MCF 10A (cell line): ENCODE measurements at regions of chr2 and their contacts with region 1.

Region 1: DNA sequence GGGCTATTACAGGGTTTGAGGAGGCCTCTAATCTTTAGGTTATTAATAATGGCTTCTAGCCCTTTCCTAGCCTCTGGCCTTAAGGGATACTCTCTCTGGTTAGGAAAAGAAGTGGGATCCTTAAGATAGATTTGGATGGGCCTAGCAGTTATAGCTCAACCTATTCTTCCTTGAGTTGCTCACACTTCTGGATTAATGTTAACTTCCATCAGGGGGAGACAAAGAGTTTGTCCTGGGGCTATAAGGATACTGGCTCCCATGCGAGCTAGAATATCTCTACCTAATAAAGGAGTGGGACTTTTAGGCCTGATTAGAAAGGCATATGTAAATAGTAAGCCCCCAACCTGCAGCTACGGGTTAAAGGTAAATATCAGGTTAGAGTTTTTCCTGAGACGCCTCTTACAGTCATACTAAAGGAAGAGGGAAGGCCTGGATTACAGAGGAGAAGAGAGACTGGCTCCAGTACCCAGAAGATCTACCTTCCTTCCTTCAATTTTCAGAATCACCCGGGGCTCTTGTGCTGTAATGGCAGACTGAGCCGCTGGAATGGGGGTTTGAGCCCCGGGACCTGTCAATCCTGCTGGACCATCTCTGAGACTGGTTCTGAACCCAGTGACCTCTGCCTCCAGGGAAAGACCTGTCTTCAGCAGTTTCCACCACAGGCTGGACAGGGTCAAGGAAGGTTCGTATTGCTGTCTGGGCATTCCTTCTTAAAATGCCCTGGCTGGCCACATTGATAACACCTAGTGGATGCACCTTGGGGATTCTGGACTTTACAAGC is 14.1 kb upstream of the PTH2R start:
- DNase-seq: peak; percentile 17
- H3K4me3 Mint-ChIP-seq: no peak overlapping the region
- H3K27ac Mint-ChIP-seq: no peak overlapping the region
- H3K4me1 Mint-ChIP-seq: no peaks in the 10 kb centered on the region
- H3K27me3 Mint-ChIP-seq: no peaks in the 10 kb centered on the region
- CTCF ChIP-seq: no peak

Region 2: DNA sequence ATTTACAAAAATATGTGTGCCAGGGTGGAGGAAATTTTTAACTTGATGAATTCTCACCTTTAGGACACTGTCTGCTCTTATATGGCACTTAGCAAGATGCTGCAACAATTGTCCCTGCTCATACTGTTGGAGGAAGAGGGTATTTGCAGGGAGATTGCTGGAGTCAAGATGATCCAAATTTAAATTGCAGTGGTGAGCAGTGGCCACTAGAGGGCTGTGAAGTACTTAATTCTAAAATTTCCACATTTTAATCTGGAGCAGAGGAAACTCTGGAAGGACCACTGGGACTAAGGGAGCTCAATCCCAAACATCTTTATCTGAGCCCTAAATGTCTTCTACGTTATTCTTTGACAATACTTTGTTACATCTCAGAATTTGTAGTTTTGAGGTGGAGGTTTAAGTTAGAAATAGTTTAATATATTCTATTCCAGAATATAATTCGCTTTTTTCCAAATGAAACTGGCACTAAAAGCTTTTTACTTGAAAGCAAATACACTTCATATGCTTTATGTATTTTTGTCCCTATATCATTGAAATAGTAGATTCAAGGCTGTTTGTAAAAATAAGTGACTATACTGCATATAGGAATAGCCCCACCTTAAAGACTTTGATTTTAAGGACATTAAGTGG is 18.9 kb before region 1 on chr2:
- CTCF ChIA-PET with region 1: interaction called, 54 read pairs
- POLR2A ChIA-PET with region 1: no interaction called
- intact Hi-C with region 1: no loop called
- DNase-seq: peak; percentile 59
- H3K4me3 Mint-ChIP-seq: no peak overlapping the region
- H3K27ac Mint-ChIP-seq: no peak overlapping the region
- H3K4me1 Mint-ChIP-seq: peaks cover 5% of the 10 kb centered on the region
- H3K27me3 Mint-ChIP-seq: no peaks in the 10 kb centered on the region
- CTCF ChIP-seq: peak; percentile 65

Region 3: GRCh38 chr2:208440716-208441115 is 48.2 kb after region 1 on chr2:
- CTCF ChIA-PET with region 1: no interaction called
- POLR2A ChIA-PET with region 1: no interaction called
- intact Hi-C with region 1: no loop called
- DNase-seq: no peak
- H3K4me3 Mint-ChIP-seq: no peak overlapping the region
- H3K27ac Mint-ChIP-seq: no peak overlapping the region
- H3K4me1 Mint-ChIP-seq: no peaks in the 10 kb centered on the region
- H3K27me3 Mint-ChIP-seq: peaks cover 79% of the 10 kb centered on the region
- CTCF ChIP-seq: no peak

Region 4: GRCh38 chr2:208466151-208466919 is 73.8 kb after region 1 on chr2:
- CTCF ChIA-PET with region 1: interaction called, 6 read pairs
- POLR2A ChIA-PET with region 1: no interaction called
- intact Hi-C with region 1: loop called (anchors 2 kb)
- DNase-seq: peak; percentile 68
- H3K4me3 Mint-ChIP-seq: no peak overlapping the region
- H3K27ac Mint-ChIP-seq: no peak overlapping the region
- H3K4me1 Mint-ChIP-seq: no peaks in the 10 kb centered on the region
- H3K27me3 Mint-ChIP-seq: peaks cover 21% of the 10 kb centered on the region
- CTCF ChIP-seq: peak; percentile 75

Region 5: DNA sequence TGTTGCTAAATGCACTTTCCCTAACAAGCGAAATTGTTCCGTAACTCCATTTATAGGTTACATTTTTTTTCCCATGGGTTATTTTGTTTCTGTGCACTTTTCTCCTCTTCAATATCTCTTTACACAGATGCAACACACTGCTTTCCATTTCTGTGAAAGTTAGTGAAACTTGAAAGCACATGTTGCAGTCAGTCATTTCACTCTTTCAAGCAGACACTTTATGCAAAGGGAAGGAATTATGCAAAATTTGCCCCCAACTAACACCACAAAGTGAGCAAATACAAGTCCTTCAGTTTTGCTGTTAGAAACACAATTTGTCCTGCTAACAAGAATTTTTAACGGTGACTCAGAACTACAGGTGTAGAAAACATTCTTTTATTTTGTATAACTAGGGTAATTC is 138.9 kb after region 1 on chr2:
- CTCF ChIA-PET with region 1: no interaction called
- POLR2A ChIA-PET with region 1: no interaction called
- intact Hi-C with region 1: no loop called
- DNase-seq: no peak
- H3K4me3 Mint-ChIP-seq: no peak overlapping the region
- H3K27ac Mint-ChIP-seq: no peak overlapping the region
- H3K4me1 Mint-ChIP-seq: no peaks in the 10 kb centered on the region
- H3K27me3 Mint-ChIP-seq: no peaks in the 10 kb centered on the region
- CTCF ChIP-seq: no peak

Region 6: GRCh38 chr2:208820014-208820688 is 427.7 kb after region 1 on chr2:
- CTCF ChIA-PET with region 1: interaction called, 5 read pairs
- POLR2A ChIA-PET with region 1: no interaction called
- intact Hi-C with region 1: loop called (anchors 2 kb)
- DNase-seq: peak; percentile 18
- H3K4me3 Mint-ChIP-seq: no peak overlapping the region
- H3K27ac Mint-ChIP-seq: no peak overlapping the region
- H3K4me1 Mint-ChIP-seq: no peaks in the 10 kb centered on the region
- H3K27me3 Mint-ChIP-seq: peaks cover 12% of the 10 kb centered on the region
- CTCF ChIP-seq: peak; percentile 30

Region 7: DNA sequence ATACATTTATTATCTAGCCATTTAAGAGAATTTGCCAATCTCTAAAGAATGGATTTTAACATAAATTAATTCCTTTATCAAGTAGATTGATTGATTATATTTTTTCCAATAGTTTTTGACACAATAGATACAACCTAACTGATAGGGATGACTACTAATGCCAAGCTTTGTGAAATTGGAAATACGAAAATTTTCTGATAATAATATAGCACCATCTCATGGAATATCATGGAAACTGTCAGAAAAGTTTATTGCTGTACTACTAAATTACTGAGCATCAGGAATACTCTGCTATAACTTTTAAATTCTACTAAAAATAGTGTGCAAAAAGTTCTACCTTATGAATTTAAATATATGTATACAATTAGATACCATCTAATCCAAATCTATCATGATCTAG is 929.6 kb after region 1 on chr2:
- CTCF ChIA-PET with region 1: interaction called, 12 read pairs
- POLR2A ChIA-PET with region 1: no interaction called
- intact Hi-C with region 1: loop called (anchors 1 kb)
- DNase-seq: no peak
- H3K4me3 Mint-ChIP-seq: no peak overlapping the region
- H3K27ac Mint-ChIP-seq: no peak overlapping the region
- H3K4me1 Mint-ChIP-seq: peaks cover 6% of the 10 kb centered on the region
- H3K27me3 Mint-ChIP-seq: no peaks in the 10 kb centered on the region
- CTCF ChIP-seq: no peak